MCF 10A (cell line): ENCODE measurements at regions of chr1 and their contacts with region 1.

Region 1: GRCh38 chr1:155193275-155193990 is 14.3 kb downstream of the THBS3 start:
- DNase-seq: peak; percentile 100
- H3K4me3 Mint-ChIP-seq: peak overlapping the region; percentile 94
- H3K27ac Mint-ChIP-seq: peak overlapping the region; percentile 100
- H3K4me1 Mint-ChIP-seq: peaks cover 32% of the 10 kb centered on the region
- H3K27me3 Mint-ChIP-seq: no peaks in the 10 kb centered on the region
- CTCF ChIP-seq: peak; percentile 99

Region 2: DNA sequence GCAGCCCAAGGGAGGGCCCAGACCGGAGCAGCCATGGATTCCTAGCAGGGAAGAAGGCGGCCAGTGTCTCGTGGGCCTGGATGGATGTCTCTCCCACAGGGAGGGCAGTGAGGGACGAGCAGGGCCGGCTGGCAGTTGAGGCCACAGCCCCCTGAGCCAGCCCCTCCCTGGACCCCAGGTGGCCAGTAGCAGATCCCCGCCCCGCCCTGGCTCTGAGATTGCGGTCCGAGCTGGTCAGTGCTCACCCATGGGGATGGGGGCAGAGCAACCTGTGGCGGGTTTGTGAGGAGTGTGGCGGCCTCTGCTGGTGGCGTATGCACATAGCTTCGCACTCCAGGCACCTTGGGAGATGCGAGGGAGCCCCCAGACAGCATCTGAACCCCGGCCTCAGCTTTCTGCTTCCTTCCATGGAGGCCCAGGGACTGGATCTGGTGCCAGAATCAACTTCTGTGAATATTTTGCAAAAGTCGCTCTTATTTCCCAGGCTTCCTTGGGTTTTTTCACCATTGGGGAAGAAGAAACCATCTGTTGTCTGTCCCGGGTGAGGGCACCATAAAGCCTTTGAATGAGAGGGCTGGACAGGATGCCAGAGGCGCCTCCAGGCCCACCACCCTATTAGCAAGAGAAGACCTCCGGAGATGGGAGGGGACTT is 314.9 kb before region 1 on chr1:
- CTCF ChIA-PET with region 1: no interaction called
- POLR2A ChIA-PET with region 1: no interaction called
- intact Hi-C with region 1: no loop called
- DNase-seq: peak; percentile 81
- H3K4me3 Mint-ChIP-seq: no peak overlapping the region
- H3K27ac Mint-ChIP-seq: no peak overlapping the region
- H3K4me1 Mint-ChIP-seq: peaks cover 14% of the 10 kb centered on the region
- H3K27me3 Mint-ChIP-seq: no peaks in the 10 kb centered on the region
- CTCF ChIP-seq: peak; percentile 97

Region 3: GRCh38 chr1:155116113-155116764 is 77.2 kb before region 1 on chr1:
- CTCF ChIA-PET with region 1: no interaction called
- POLR2A ChIA-PET with region 1: no interaction called
- intact Hi-C with region 1: no loop called
- DNase-seq: no peak
- H3K4me3 Mint-ChIP-seq: no peak overlapping the region
- H3K27ac Mint-ChIP-seq: no peak overlapping the region
- H3K4me1 Mint-ChIP-seq: no peaks in the 10 kb centered on the region
- H3K27me3 Mint-ChIP-seq: no peaks in the 10 kb centered on the region
- CTCF ChIP-seq: no peak

Region 4: DNA sequence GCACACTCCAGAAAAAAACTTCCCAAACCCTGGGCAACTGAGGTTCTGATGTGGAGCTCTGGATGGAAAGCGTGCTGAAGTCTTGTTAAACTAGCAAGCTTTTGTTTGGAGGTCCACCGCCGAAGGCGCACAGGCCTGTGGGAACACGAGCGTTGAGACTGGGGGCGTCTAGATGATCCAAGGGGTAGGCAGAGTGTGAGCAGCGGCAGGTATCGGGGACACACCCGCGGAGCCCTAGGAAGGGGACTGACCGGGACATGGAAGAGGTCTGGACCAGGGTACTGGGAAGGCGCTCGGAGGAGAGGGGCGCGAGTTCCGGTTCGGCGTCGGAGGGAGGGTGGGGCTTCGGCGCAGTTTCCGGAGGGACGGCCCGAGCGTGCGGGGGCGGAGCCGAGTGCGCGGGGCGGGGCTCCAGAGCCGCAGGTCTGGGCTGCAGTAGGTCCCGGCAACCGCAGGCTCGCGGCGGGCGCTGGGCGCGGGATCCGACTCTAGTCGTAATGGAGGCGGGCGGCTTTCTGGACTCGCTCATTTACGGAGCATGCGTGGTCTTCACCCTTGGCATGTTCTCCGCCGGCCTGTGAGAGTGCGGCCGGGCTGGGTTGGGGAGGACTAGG is 57.9 kb before region 1 on chr1 and contains the start of gene SLC50A1:
- CTCF ChIA-PET with region 1: interaction called, 8 read pairs
- POLR2A ChIA-PET with region 1: interaction called, 61 read pairs
- intact Hi-C with region 1: no loop called
- DNase-seq: peak; percentile 94
- H3K4me3 Mint-ChIP-seq: peak within 1 kb of the TSS; percentile 80
- H3K27ac Mint-ChIP-seq: peak within 1 kb of the TSS; percentile 94
- H3K4me1 Mint-ChIP-seq: peaks cover 50% of the 10 kb centered on the region
- H3K27me3 Mint-ChIP-seq: no peaks in the 10 kb centered on the region
- CTCF ChIP-seq: no peak
- total RNA-seq, gene SLC50A1: 91.2 and 97.8 TPM in 2 replicates

Region 5: GRCh38 chr1:155208541-155209311 is 15.3 kb after region 1 on chr1 and contains the start of gene MTX1:
- CTCF ChIA-PET with region 1: interaction called, 111 read pairs
- POLR2A ChIA-PET with region 1: interaction called, 131 read pairs
- intact Hi-C with region 1: no loop called
- DNase-seq: peak; percentile 79
- H3K4me3 Mint-ChIP-seq: peak within 1 kb of the TSS; percentile 76
- H3K27ac Mint-ChIP-seq: peak within 1 kb of the TSS; percentile 91
- H3K4me1 Mint-ChIP-seq: peaks cover 22% of the 10 kb centered on the region
- H3K27me3 Mint-ChIP-seq: no peaks in the 10 kb centered on the region
- CTCF ChIP-seq: no peak
- total RNA-seq, gene MTX1: 64.6 and 67.4 TPM in 2 replicates

Region 6: GRCh38 chr1:155227261-155228095 is 34.0 kb after region 1 on chr1:
- CTCF ChIA-PET with region 1: interaction called, 27 read pairs
- POLR2A ChIA-PET with region 1: interaction called, 37 read pairs
- intact Hi-C with region 1: loop called (anchors 5 kb)
- DNase-seq: peak; percentile 100
- H3K4me3 Mint-ChIP-seq: peak overlapping the region; percentile 85
- H3K27ac Mint-ChIP-seq: peak overlapping the region; percentile 89
- H3K4me1 Mint-ChIP-seq: peaks cover 34% of the 10 kb centered on the region
- H3K27me3 Mint-ChIP-seq: no peaks in the 10 kb centered on the region
- CTCF ChIP-seq: no peak

Region 7: DNA sequence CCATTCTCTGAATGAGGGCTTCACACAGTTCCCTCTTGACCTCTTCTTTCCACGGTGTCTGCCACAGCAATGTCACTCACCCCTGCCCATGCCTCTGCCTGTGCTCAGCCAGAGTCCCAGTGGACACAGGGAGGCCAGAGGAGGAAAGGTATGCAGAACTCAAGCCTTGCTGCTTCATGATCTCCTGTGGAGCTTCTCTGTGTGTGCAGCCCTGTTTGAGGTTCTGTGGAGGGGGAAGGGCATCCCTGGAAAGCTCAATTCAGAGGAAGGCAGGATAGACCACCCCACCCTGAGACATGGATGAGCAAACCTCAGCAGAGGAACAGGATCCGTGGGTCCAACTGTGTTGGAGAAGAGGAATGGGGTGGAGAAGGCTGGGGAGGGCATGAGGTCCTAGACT is 85.8 kb after region 1 on chr1:
- CTCF ChIA-PET with region 1: no interaction called
- POLR2A ChIA-PET with region 1: no interaction called
- intact Hi-C with region 1: no loop called
- DNase-seq: no peak
- H3K4me3 Mint-ChIP-seq: no peak overlapping the region
- H3K27ac Mint-ChIP-seq: no peak overlapping the region
- H3K4me1 Mint-ChIP-seq: peaks cover 11% of the 10 kb centered on the region
- H3K27me3 Mint-ChIP-seq: no peaks in the 10 kb centered on the region
- CTCF ChIP-seq: no peak